ENCODE measurements at regions of chr6 and their contacts with region 1.

Region 1: DNA sequence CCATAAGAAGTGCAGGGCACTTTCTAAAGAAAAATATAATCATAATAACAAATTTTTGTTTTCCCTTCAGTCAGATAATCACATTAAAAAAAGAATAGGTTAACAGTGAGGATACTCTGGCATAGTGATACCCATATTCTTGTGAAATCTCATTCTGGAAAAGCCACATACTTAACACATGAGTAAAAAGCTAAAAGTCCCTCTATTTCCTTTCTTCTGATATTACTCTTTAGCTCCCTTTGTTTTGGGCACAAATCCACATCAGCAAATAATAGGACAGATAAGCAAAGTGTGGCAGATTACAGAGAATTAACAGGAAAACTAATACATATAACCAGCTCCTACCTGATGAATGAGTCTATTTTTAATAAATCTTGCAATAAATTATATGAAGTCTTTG is 15.8 kb downstream of the SHPRH start:
- DNase-seq: no peak
- ATAC-seq: no peak
- H3K4me3 ChIP-seq: no peak overlapping the region
- H3K27ac ChIP-seq: no peak overlapping the region
- H3K4me1 ChIP-seq: peaks cover 0 to under 1% (median 0%) of the 10 kb centered on the region in 12 donors
- H3K27me3 ChIP-seq: no peaks in the 10 kb centered on the region
- CTCF ChIP-seq: no peak
- POLR2A ChIP-seq: no peak

Region 2: DNA sequence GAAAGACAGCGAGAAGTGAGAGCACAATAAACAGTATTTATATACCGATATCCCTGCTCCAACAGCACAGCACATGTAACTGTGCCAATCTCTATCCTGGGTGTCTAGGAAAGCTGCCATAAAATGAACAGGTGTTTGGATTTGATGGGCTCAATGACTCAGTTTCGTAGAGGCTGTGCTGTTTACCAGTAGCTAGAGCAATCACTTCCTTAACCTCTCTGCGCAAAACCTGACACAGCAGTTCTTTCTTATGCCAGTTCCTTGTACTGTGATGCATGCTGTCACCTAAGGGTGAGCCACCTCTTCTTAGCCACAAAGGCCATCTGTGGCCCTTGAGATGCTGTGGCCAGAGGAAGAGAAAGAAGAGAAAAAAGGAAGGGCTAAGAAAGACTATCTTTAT is 43.5 kb before region 1 on chr6:
- intact Hi-C with region 1: loop called in 1 of 10 experiments (anchors 5 kb)
- DNase-seq: no peak
- ATAC-seq: peak in 3 of 4 donors; percentile 26 to 60 (median 37)
- H3K4me3 ChIP-seq: no peak overlapping the region
- H3K27ac ChIP-seq: no peak overlapping the region
- H3K4me1 ChIP-seq: peaks cover 0 to 12% (median 4%) of the 10 kb centered on the region in 12 donors
- H3K27me3 ChIP-seq: no peaks in the 10 kb centered on the region
- CTCF ChIP-seq: no peak
- POLR2A ChIP-seq: no peak

Measured in heart left ventricle (tissue), 16 donors.